ENCODE measurements at regions of chr2 and their contacts with region 1.

Region 1: DNA sequence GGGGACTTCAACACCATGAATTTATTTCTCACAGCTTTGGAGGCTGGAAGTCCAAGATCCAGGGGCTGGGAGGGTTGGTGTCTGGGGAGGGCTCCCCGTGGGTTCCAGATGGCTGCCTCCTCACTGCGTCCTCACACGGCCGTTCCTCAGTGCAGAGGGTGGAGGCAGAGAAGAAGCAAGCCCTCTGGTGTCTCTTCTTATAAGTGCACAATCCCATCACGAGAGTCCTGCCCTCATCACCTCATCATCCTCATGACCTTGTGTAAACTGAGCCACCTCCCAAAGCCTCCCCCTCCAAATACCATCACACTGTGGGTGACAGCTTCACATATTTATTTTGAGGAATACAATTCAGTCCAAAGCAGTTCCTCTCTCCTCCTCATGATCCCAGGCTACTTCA is 26.3 kb downstream of the TMEM163 start:
- DNase-seq: peak in 3 of 9 experiments; percentile 30 to 71 (median 52)
- ATAC-seq: peak; percentile 65
- H3K4me3 ChIP-seq: no peak overlapping the region
- H3K4me3 Mint-ChIP-seq: no peak overlapping the region
- H3K27ac ChIP-seq: no peak overlapping the region
- H3K27ac Mint-ChIP-seq: no peak overlapping the region
- H3K4me1 ChIP-seq: no peaks in the 10 kb centered on the region
- H3K4me1 Mint-ChIP-seq: no peaks in the 10 kb centered on the region
- H3K27me3 ChIP-seq: no peaks in the 10 kb centered on the region
- H3K27me3 Mint-ChIP-seq: peaks cover 3% of the 10 kb centered on the region
- CTCF ChIP-seq: peak; percentile 19

Region 2: DNA sequence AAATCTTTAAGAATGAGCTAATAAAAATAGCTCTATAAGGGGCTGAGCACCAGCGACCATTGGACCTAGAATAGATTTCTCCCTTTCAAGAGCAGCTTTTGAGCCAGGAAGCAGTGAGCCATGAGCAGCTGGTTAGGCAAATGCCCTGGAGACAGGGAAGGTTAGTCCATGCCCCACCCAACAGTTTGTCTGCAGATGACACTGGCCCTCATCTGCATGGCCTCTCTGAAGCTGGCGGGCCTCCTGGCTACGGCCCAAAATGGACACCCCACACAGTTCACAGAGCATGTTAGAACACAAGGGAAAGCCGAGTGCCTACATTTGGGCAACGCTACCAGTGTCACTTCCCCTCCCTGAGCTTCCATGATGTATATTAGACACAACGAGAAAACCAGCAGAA is 237.6 kb before region 1 on chr2:
- CTCF ChIA-PET with region 1: no interaction called
- POLR2A ChIA-PET with region 1: no interaction called
- intact Hi-C with region 1: loop called (anchors 5 to 10 kb)
- DNase-seq: no peak
- ATAC-seq: no peak
- H3K4me3 ChIP-seq: no peak overlapping the region
- H3K4me3 Mint-ChIP-seq: no peak overlapping the region
- H3K27ac ChIP-seq: no peak overlapping the region
- H3K27ac Mint-ChIP-seq: no peak overlapping the region
- H3K4me1 ChIP-seq: no peaks in the 10 kb centered on the region
- H3K4me1 Mint-ChIP-seq: no peaks in the 10 kb centered on the region
- H3K27me3 ChIP-seq: no peaks in the 10 kb centered on the region
- H3K27me3 Mint-ChIP-seq: no peaks in the 10 kb centered on the region
- CTCF ChIP-seq: no peak

Region 3: GRCh38 chr2:134460583-134460998 is 231.9 kb before region 1 on chr2:
- CTCF ChIA-PET with region 1: no interaction called
- POLR2A ChIA-PET with region 1: no interaction called
- intact Hi-C with region 1: loop called (anchors 5 to 10 kb)
- DNase-seq: peak in 7 of 9 experiments; percentile 16 to 58 (median 47)
- ATAC-seq: peak; percentile 48
- H3K4me3 ChIP-seq: no peak overlapping the region
- H3K4me3 Mint-ChIP-seq: no peak overlapping the region
- H3K27ac ChIP-seq: no peak overlapping the region
- H3K27ac Mint-ChIP-seq: no peak overlapping the region
- H3K4me1 ChIP-seq: no peaks in the 10 kb centered on the region
- H3K4me1 Mint-ChIP-seq: no peaks in the 10 kb centered on the region
- H3K27me3 ChIP-seq: no peaks in the 10 kb centered on the region
- H3K27me3 Mint-ChIP-seq: no peaks in the 10 kb centered on the region
- CTCF ChIP-seq: no peak

Region 4: GRCh38 chr2:134574611-134575330 is 117.7 kb before region 1 on chr2:
- CTCF ChIA-PET with region 1: interaction called, 3 read pairs
- POLR2A ChIA-PET with region 1: interaction called, 3 read pairs
- intact Hi-C with region 1: loop called (anchors 1 to 5 kb)
- DNase-seq: no peak
- ATAC-seq: no peak
- H3K4me3 ChIP-seq: no peak overlapping the region
- H3K4me3 Mint-ChIP-seq: no peak overlapping the region
- H3K27ac ChIP-seq: no peak overlapping the region
- H3K27ac Mint-ChIP-seq: no peak overlapping the region
- H3K4me1 ChIP-seq: no peaks in the 10 kb centered on the region
- H3K4me1 Mint-ChIP-seq: no peaks in the 10 kb centered on the region
- H3K27me3 ChIP-seq: no peaks in the 10 kb centered on the region
- H3K27me3 Mint-ChIP-seq: peaks cover 4% of the 10 kb centered on the region
- CTCF ChIP-seq: no peak

Region 5: DNA sequence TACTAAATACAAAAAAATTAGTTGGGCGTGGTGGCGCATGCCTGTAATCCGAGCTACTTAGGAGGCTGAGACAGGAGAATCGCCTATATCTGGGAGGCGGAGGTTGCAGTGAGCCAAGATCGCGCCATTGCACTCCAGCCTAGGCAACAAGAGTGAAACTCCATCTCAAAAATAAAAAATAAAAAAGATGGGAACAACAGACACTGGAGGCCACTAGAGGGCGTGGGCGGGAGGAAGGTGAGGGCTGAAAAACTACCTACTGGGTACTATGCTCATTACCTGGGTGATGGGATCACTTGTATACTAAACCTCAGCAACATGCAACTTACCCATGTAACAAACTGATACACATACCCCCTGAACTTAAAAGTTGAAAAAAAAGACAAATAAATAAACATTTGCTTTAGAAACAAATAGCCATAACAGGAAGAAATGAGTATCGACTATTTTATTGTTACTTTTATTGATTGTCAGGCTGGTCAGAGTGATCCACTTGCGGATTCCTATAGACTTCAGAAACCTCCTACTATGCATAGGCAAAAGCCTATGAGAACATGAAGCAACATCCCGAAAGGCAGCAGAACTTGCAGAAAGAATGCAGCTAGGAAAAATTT is 34.8 kb before region 1 on chr2:
- CTCF ChIA-PET with region 1: interaction called, 5 read pairs
- POLR2A ChIA-PET with region 1: no interaction called
- intact Hi-C with region 1: loop called in 1 of 2 experiments (anchors 5 kb)
- DNase-seq: peak in 4 of 9 experiments; percentile 24 to 65 (median 44)
- ATAC-seq: no peak
- H3K4me3 ChIP-seq: no peak overlapping the region
- H3K4me3 Mint-ChIP-seq: no peak overlapping the region
- H3K27ac ChIP-seq: no peak overlapping the region
- H3K27ac Mint-ChIP-seq: no peak overlapping the region
- H3K4me1 ChIP-seq: peaks cover 6% of the 10 kb centered on the region
- H3K4me1 Mint-ChIP-seq: peaks cover 25% of the 10 kb centered on the region
- H3K27me3 ChIP-seq: no peaks in the 10 kb centered on the region
- H3K27me3 Mint-ChIP-seq: peaks cover 6% of the 10 kb centered on the region
- CTCF ChIP-seq: peak; percentile 25

Region 6: DNA sequence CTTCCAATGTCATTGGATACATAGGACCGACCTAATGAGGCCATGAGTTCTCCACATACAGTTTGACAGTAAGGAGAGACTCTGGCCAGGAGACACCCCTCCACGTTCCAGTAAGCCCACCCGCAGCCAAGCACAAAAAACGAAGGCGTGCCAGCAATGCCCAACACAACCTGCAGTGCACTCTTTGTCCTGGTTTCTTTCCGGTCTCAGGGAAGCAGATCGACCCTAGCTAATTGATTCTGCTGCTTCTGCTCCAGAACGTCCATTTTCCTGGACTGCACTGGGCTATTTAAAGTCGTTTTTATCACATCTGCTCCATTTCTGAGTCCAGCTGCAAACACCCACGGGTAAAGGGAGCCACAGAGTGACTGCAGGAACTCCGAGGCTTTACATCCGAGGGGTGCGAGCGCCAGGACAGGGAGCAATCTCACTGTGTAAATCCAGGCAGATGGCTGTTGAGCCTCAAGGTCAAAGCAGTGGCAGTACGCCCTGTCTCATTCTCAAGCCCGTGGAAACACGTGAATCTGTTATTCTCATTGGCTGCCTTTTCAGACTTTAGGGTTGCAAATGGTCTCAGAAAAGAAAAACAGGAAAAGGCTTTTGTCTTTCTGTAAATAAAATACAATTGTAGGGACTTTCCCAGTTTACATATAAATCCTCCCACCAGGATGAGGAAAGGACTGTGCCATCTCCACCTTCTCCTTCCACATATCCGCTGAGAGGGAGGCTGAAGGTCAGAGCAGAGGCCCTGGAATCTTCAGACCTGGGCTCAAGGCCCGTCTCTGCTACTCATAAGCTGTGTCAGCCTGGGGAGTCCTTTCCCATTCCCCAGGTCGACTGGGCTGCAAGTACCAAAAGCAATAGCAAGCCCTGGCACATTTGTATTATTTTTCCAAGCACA is 14.4 kb before region 1 on chr2:
- CTCF ChIA-PET with region 1: no interaction called
- POLR2A ChIA-PET with region 1: no interaction called
- intact Hi-C with region 1: no loop called
- DNase-seq: no peak
- ATAC-seq: no peak
- H3K4me3 ChIP-seq: no peak overlapping the region
- H3K4me3 Mint-ChIP-seq: no peak overlapping the region
- H3K27ac ChIP-seq: no peak overlapping the region
- H3K27ac Mint-ChIP-seq: no peak overlapping the region
- H3K4me1 ChIP-seq: peaks cover 44% of the 10 kb centered on the region
- H3K4me1 Mint-ChIP-seq: peaks cover 52% of the 10 kb centered on the region
- H3K27me3 ChIP-seq: no peaks in the 10 kb centered on the region
- H3K27me3 Mint-ChIP-seq: peaks cover 8% of the 10 kb centered on the region
- CTCF ChIP-seq: no peak

Region 7: GRCh38 chr2:135573620-135574019 is 881.1 kb after region 1 on chr2:
- CTCF ChIA-PET with region 1: no interaction called
- POLR2A ChIA-PET with region 1: no interaction called
- intact Hi-C with region 1: no loop called
- DNase-seq: no peak
- ATAC-seq: no peak
- H3K4me3 ChIP-seq: no peak overlapping the region
- H3K4me3 Mint-ChIP-seq: no peak overlapping the region
- H3K27ac ChIP-seq: no peak overlapping the region
- H3K27ac Mint-ChIP-seq: no peak overlapping the region
- H3K4me1 ChIP-seq: no peaks in the 10 kb centered on the region
- H3K4me1 Mint-ChIP-seq: no peaks in the 10 kb centered on the region
- H3K27me3 ChIP-seq: no peaks in the 10 kb centered on the region
- H3K27me3 Mint-ChIP-seq: no peaks in the 10 kb centered on the region
- CTCF ChIP-seq: no peak